CD4-positive, alpha-beta memory T cell (primary cell): ENCODE measurements at regions of chr12 and their contacts with region 1.

Region 1: GRCh38 chr12:122452701-122453285 is 30.3 kb upstream of the CLIP1 start:
- DNase-seq: peak in 2 of 5 donors; percentile 13 to 18
- H3K4me3 ChIP-seq: peak overlapping the region in 1 of 2 donors; percentile 5
- H3K4me3 Mint-ChIP-seq: peak overlapping the region; percentile 32 to 90 (median 84)
- H3K27ac ChIP-seq: peak overlapping the region; percentile 54
- H3K27ac Mint-ChIP-seq: peak overlapping the region; percentile 90 to 99 (median 96)
- H3K4me1 ChIP-seq: peaks cover 31% of the 10 kb centered on the region
- H3K4me1 Mint-ChIP-seq: peaks cover 20 to 41% (median 28%) of the 10 kb centered on the region in 4 donors
- H3K27me3 ChIP-seq: no peaks in the 10 kb centered on the region
- H3K27me3 Mint-ChIP-seq: no peaks in the 10 kb centered on the region

Region 2: GRCh38 chr12:122356192-122356635 is 96.6 kb before region 1 on chr12:
- CTCF ChIA-PET with region 1: no interaction called
- POLR2A ChIA-PET with region 1: no interaction called
- intact Hi-C with region 1: no loop called
- DNase-seq: peak in 4 of 5 donors; percentile 38 to 54 (median 44)
- H3K4me3 ChIP-seq: no peak overlapping the region
- H3K4me3 Mint-ChIP-seq: no peak overlapping the region
- H3K27ac ChIP-seq: no peak overlapping the region
- H3K27ac Mint-ChIP-seq: peak overlapping the region in 4 of 7 donors; percentile 5 to 87 (median 36)
- H3K4me1 ChIP-seq: no peaks in the 10 kb centered on the region
- H3K4me1 Mint-ChIP-seq: peaks cover 0 to 6% (median 3%) of the 10 kb centered on the region in 4 donors
- H3K27me3 ChIP-seq: no peaks in the 10 kb centered on the region
- H3K27me3 Mint-ChIP-seq: no peaks in the 10 kb centered on the region

Region 3: GRCh38 chr12:122413516-122414404 is 39.0 kb before region 1 on chr12:
- CTCF ChIA-PET with region 1: interaction called, 3 read pairs
- POLR2A ChIA-PET with region 1: interaction called, 5 read pairs
- intact Hi-C with region 1: loop called (anchors 5 kb)
- DNase-seq: no peak
- H3K4me3 ChIP-seq: no peak overlapping the region
- H3K4me3 Mint-ChIP-seq: peak overlapping the region in 7 of 8 donors; percentile 17 to 83 (median 69)
- H3K27ac ChIP-seq: no peak overlapping the region
- H3K27ac Mint-ChIP-seq: peak overlapping the region; percentile 35 to 94 (median 90)
- H3K4me1 ChIP-seq: peaks cover 54% of the 10 kb centered on the region
- H3K4me1 Mint-ChIP-seq: peaks cover 26 to 44% (median 34%) of the 10 kb centered on the region in 4 donors
- H3K27me3 ChIP-seq: no peaks in the 10 kb centered on the region
- H3K27me3 Mint-ChIP-seq: no peaks in the 10 kb centered on the region